GM10248 (cell line): ENCODE measurements at regions of chr7 and their contacts with region 1.

Region 1: GRCh38 chr7:108114117-108114841 is 15.9 kb downstream of the LAMB4 start:
- DNase-seq: no peak
- CTCF ChIP-seq: peak; percentile 82

Region 2: GRCh38 chr7:108124820-108125219 is 10.5 kb after region 1 on chr7:
- CTCF ChIA-PET with region 1: interaction called, 19 read pairs
- POLR2A ChIA-PET with region 1: no interaction called
- DNase-seq: no peak
- CTCF ChIP-seq: no peak

Region 3: GRCh38 chr7:108135446-108136190 is 21.3 kb after region 1 on chr7:
- CTCF ChIA-PET with region 1: interaction called, 30 read pairs
- POLR2A ChIA-PET with region 1: no interaction called
- DNase-seq: peak; percentile 45
- CTCF ChIP-seq: no peak